ENCODE measurements at regions of chr15 and their contacts with region 1.

Region 1: DNA sequence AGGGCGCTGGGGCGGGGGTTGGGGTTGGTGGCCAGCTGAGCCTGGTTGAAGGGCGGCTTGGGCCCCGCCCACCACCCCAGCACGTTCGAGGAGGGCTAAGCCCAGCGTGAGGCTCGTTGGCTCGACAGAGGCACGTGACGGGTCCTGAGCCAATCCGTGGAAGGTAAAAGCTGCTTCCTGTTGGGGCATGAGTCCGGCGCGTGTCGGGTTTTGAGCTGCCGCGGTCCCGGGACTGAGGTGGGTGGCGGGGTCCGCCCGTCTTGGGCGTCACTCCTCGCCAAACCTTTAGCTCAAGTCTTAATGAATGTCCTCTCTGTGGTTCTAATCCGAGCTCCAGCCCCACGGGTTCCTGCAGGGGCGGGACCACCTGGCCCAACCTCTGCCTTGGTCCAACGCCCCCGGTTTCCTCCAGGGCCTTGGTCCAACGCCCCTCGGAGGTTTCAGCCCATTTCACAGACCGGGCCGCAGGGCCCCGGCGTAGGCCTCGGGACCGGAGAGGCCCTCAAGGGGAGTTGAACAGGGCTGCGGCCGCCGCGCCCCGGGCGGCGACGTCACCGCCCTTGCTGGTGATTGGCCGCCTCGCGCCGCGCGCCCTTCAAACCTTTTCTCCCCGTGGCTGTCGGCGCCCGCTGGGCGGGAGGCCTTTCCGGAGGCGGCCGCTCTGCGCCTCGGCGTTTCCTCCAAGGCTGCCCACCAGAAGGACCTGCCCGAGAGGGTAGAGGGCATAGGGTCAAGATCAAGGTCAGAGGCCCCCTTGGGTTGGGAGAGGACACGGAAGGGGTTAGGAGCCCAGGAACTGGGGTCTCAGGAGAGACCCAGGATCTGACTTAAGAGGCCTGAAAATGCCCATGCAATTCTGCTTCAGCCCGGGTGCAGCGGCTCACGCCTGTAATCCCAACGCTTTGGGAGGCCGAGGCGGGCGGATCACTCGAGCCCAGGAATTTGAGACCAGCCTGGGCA is at the start of gene RCCD1:
- DNase-seq: peak; percentile 94
- ATAC-seq: peak; percentile 95
- H3K4me3 Mint-ChIP-seq: peak within 1 kb of the TSS; percentile 84
- H3K27ac Mint-ChIP-seq: peak within 1 kb of the TSS; percentile 95
- H3K4me1 Mint-ChIP-seq: peaks cover 13% of the 10 kb centered on the region
- H3K27me3 Mint-ChIP-seq: no peaks in the 10 kb centered on the region
- total RNA-seq, gene RCCD1: 28.9 to 37.4 TPM

Region 2: GRCh38 chr15:90902040-90902839 is 52.8 kb before region 1 on chr15:
- CTCF ChIA-PET with region 1: no interaction called
- POLR2A ChIA-PET with region 1: interaction called, 3 read pairs
- intact Hi-C with region 1: loop called in 1 of 2 experiments (anchors 1 kb)
- DNase-seq: peak; percentile 83
- ATAC-seq: peak; percentile 79
- H3K4me3 Mint-ChIP-seq: peak overlapping the region; percentile 81
- H3K27ac Mint-ChIP-seq: peak overlapping the region; percentile 88
- H3K4me1 Mint-ChIP-seq: peaks cover 16% of the 10 kb centered on the region
- H3K27me3 Mint-ChIP-seq: no peaks in the 10 kb centered on the region

Region 3: GRCh38 chr15:90994417-90995311 is 39.7 kb after region 1 on chr15 and contains the start of gene PRC1:
- CTCF ChIA-PET with region 1: interaction called, 5 read pairs
- POLR2A ChIA-PET with region 1: interaction called, 6 read pairs
- intact Hi-C with region 1: loop called (anchors 1 to 5 kb)
- DNase-seq: peak; percentile 99
- ATAC-seq: peak; percentile 99
- H3K4me3 Mint-ChIP-seq: peak within 1 kb of the TSS; percentile 99
- H3K27ac Mint-ChIP-seq: peak within 1 kb of the TSS; percentile 100
- H3K4me1 Mint-ChIP-seq: peaks cover 19% of the 10 kb centered on the region
- H3K27me3 Mint-ChIP-seq: no peaks in the 10 kb centered on the region
- total RNA-seq, gene PRC1: 111 to 157 TPM

Region 4: GRCh38 chr15:91032919-91033803 is 78.2 kb after region 1 on chr15:
- CTCF ChIA-PET with region 1: interaction called, 33 read pairs
- POLR2A ChIA-PET with region 1: no interaction called
- intact Hi-C with region 1: loop called (anchors 1 to 5 kb)
- DNase-seq: peak; percentile 82
- ATAC-seq: peak; percentile 91
- H3K4me3 Mint-ChIP-seq: no peak overlapping the region
- H3K27ac Mint-ChIP-seq: no peak overlapping the region
- H3K4me1 Mint-ChIP-seq: no peaks in the 10 kb centered on the region
- H3K27me3 Mint-ChIP-seq: peaks cover 2% of the 10 kb centered on the region

Region 5: GRCh38 chr15:91271565-91272153 is 316.7 kb after region 1 on chr15:
- CTCF ChIA-PET with region 1: interaction called, 9 read pairs
- POLR2A ChIA-PET with region 1: interaction called, 3 read pairs
- intact Hi-C with region 1: loop called (anchors 1 to 5 kb)
- DNase-seq: peak; percentile 74
- ATAC-seq: peak; percentile 64
- H3K4me3 Mint-ChIP-seq: no peak overlapping the region
- H3K27ac Mint-ChIP-seq: no peak overlapping the region
- H3K4me1 Mint-ChIP-seq: peaks cover 2% of the 10 kb centered on the region
- H3K27me3 Mint-ChIP-seq: peaks cover 12% of the 10 kb centered on the region

Measured in activated CD4-positive, alpha-beta T cell treated with anti-CD3 and anti-CD28 coated beads for 36 hours (primary cell).